SK-N-SH (cell line): ENCODE measurements at regions of chr4 and their contacts with region 1.

Region 1: DNA sequence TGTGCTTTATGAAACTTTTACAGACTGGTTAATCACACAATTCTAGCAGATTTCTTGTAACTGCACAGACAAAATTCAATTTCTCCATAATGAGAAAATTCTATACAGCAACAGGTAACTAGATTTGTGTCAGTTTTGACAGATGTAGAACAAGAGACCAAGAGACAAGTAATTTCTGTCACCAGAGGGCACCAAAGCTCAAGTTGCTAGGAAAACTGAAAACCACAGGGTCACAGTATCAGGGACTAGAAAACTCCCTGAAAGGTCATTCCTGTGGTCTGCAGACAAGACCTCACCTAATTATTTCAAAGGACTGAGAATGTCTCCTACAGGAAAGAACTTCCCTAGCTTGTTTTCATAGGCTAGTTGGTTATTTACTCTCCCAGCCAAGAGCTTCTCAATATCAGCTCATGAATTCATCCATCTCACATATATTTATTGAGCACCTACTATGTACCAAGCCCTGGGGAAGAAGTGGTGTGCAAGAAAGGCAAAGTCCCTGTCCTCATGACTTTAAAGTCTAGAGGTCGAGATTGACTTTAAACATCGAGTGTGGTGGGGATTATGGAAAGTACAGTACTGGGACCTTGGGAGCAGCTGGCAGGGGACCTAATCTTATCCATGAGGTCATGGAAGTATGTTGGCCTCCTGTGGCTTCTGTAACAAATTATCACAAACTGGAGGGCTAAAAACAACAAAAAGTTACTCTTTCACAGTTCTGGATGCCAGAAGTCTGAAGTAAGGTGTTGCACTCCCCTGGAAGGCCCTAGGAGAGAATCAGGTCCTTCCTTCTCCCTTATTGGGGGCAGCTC is 47.8 kb upstream of the SETD7 start:
- DNase-seq: peak; percentile 55
- H3K4me3 ChIP-seq: no peak overlapping the region
- H3K27ac ChIP-seq: no peak overlapping the region
- H3K4me1 ChIP-seq: peaks cover 0 to 17% of the 10 kb centered on the region in 2 experiments; a peak in 1 of 4 replicates
- H3K27me3 ChIP-seq: no peaks in the 10 kb centered on the region
- CTCF ChIP-seq: peak; percentile 82
- EP300 ChIP-seq: no peak
- RAD21 ChIP-seq: peak; percentile 84

Region 2: GRCh38 chr4:139568206-139568955 is 35.4 kb before region 1 on chr4:
- CTCF ChIA-PET with region 1: interaction called, 18 read pairs
- POLR2A ChIA-PET with region 1: no interaction called
- DNase-seq: no peak
- H3K4me3 ChIP-seq: no peak overlapping the region
- H3K27ac ChIP-seq: no peak overlapping the region
- H3K4me1 ChIP-seq: no peaks in the 10 kb centered on the region
- H3K27me3 ChIP-seq: no peaks in the 10 kb centered on the region
- CTCF ChIP-seq: no peak
- EP300 ChIP-seq: no peak
- RAD21 ChIP-seq: no peak

Region 3: DNA sequence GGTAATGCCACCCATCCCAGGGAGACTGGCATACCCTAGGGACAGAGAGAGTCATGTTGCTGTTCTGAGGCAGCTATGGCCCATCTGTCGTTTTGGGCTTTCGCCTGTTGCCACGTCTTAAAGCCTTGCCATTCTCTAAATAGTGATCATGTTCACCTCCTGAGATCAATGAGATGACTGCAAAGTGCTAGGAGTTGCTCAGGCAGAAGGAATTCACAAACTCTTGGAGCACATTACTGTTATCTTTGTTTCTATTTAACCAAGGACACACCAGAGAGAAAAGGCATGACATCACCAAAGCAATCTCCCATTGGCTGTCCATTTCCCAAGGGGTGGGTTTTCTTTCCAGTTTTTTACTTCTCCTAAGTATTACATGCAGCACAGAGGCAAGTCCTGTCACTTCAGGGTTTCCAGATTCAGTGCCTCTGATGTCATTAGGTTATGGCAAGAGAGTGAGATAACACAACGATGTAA is 10.7 kb before region 1 on chr4:
- CTCF ChIA-PET with region 1: interaction called, 46 read pairs
- POLR2A ChIA-PET with region 1: interaction called, 3 read pairs
- DNase-seq: no peak
- H3K4me3 ChIP-seq: no peak overlapping the region
- H3K27ac ChIP-seq: no peak overlapping the region
- H3K4me1 ChIP-seq: peaks cover 0 to 15% of the 10 kb centered on the region in 2 experiments; a peak in 2 of 4 replicates
- H3K27me3 ChIP-seq: no peaks in the 10 kb centered on the region
- CTCF ChIP-seq: no peak
- EP300 ChIP-seq: no peak
- RAD21 ChIP-seq: no peak

Region 4: GRCh38 chr4:139625482-139625881 is 21.7 kb after region 1 on chr4:
- CTCF ChIA-PET with region 1: interaction called, 38 read pairs
- POLR2A ChIA-PET with region 1: interaction called, 3 read pairs
- DNase-seq: no peak
- H3K4me3 ChIP-seq: no peak overlapping the region
- H3K27ac ChIP-seq: no peak overlapping the region
- H3K4me1 ChIP-seq: no peaks in the 10 kb centered on the region; a peak in 1 of 4 replicates
- H3K27me3 ChIP-seq: no peaks in the 10 kb centered on the region; the same call in 1 of the 2 replicates
- CTCF ChIP-seq: no peak
- EP300 ChIP-seq: no peak
- RAD21 ChIP-seq: no peak

Region 5: DNA sequence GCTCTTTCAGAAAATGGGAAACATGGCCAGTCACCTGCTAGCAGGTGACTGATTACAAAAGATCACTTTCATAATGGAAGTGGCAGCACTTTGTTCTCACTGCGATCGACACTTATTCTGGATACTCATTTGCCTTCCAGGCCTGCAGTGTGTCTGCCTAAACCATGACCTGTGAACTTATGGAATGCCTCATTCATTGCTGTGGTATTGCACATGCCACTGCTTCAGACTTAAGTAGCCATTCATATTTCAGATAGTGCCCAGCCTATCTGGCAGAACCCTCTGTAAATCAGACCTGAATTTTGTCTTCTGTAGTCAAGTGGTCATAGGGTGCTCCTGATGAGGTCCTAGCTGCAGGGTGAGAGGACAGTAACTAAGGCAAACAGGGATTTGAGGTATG is 38.6 kb after region 1 on chr4:
- CTCF ChIA-PET with region 1: interaction called, 13 read pairs
- POLR2A ChIA-PET with region 1: no interaction called
- DNase-seq: no peak
- H3K4me3 ChIP-seq: no peak overlapping the region
- H3K27ac ChIP-seq: no peak overlapping the region
- H3K4me1 ChIP-seq: no peaks in the 10 kb centered on the region
- H3K27me3 ChIP-seq: no peaks in the 10 kb centered on the region
- CTCF ChIP-seq: no peak
- EP300 ChIP-seq: no peak
- RAD21 ChIP-seq: no peak

Region 6: DNA sequence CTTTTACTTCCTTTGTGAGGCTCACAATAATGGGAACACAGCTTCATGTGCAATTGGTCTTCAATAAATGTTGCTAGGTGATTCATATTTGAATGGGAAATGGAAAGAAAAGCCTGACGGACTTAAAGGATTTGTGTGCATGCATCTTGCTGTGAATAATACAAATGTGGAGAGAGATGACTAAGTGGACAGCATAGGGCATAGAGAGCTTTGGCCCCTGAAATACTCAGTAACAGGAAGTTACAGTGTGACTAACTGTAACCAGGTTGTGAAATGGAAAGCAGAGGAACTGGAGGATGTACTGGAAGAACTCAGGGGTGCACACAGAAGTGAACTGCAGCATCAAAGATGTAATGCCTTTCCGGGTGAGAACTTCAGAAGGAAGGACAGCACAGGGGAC is 268.5 kb after region 1 on chr4:
- CTCF ChIA-PET with region 1: no interaction called
- POLR2A ChIA-PET with region 1: no interaction called
- DNase-seq: no peak
- H3K4me3 ChIP-seq: peak overlapping the region in 1 of 2 experiments; percentile 32; a peak in 1 of 4 replicates
- H3K27ac ChIP-seq: peak overlapping the region; percentile 40 to 86
- H3K4me1 ChIP-seq: peaks cover 9 to 27% of the 10 kb centered on the region in 2 experiments
- H3K27me3 ChIP-seq: no peaks in the 10 kb centered on the region
- CTCF ChIP-seq: no peak
- EP300 ChIP-seq: peak in 1 of 2 experiments; percentile 37; a peak in 1 of 4 replicates
- RAD21 ChIP-seq: no peak

Region 7: DNA sequence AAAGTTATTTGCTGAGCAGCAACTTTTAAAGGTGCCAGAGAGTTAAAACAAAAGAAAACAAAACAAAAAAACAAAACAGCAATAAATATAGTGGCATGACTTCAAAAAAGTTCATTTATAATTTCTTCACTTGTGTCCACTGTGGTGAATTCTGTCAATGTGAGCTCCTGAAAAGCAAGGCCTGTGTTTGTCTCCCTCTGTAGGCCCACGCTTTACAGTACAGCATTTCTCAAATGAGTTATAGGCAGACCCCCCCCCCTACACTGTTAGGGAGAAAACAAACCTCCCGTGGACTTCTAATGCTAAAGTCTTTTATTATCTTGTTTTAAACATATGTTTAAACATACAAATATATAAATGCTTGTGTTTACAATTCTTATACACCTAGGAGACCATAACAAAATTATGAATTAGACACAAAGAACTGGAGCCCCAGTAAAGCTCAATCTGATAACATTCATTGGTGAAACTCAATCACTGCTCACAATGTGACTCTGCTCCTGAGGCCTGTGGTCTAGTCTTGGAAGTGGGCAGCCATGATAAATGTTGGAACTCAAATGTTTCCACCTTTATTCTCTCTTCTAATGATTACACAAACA is 722.7 kb after region 1 on chr4:
- CTCF ChIA-PET with region 1: interaction called, 12 read pairs
- POLR2A ChIA-PET with region 1: no interaction called
- DNase-seq: peak; percentile 54
- H3K4me3 ChIP-seq: peak overlapping the region in 1 of 2 experiments; percentile 26; a peak in 1 of 4 replicates
- H3K27ac ChIP-seq: no peak overlapping the region
- H3K4me1 ChIP-seq: no peaks in the 10 kb centered on the region; a peak in 1 of 4 replicates
- H3K27me3 ChIP-seq: no peaks in the 10 kb centered on the region
- CTCF ChIP-seq: peak; percentile 88
- EP300 ChIP-seq: no peak
- RAD21 ChIP-seq: peak; percentile 85